ENCODE measurements at regions of chr2 and their contacts with region 1.

Region 1: GRCh38 chr2:218995972-218996711 is 2.9 kb upstream of the CRYBA2 start:
- DNase-seq: peak; percentile 88
- CTCF ChIP-seq: peak; percentile 92

Region 2: GRCh38 chr2:219010162-219010756 is 14.1 kb after region 1 on chr2:
- CTCF ChIA-PET with region 1: interaction called, 16 read pairs
- POLR2A ChIA-PET with region 1: no interaction called
- DNase-seq: peak; percentile 69
- CTCF ChIP-seq: peak; percentile 56

Region 3: GRCh38 chr2:219229305-219230058 is 233.3 kb after region 1 on chr2 and contains the starts of genes ANKZF1 and ATG9A:
- CTCF ChIA-PET with region 1: no interaction called
- POLR2A ChIA-PET with region 1: no interaction called
- DNase-seq: peak; percentile 99
- CTCF ChIP-seq: no peak

Measured in GM10248 (cell line).